Aorta (tissue), 5 donors: ENCODE measurements at regions of chr12 and their contacts with region 1.

Region 1: DNA sequence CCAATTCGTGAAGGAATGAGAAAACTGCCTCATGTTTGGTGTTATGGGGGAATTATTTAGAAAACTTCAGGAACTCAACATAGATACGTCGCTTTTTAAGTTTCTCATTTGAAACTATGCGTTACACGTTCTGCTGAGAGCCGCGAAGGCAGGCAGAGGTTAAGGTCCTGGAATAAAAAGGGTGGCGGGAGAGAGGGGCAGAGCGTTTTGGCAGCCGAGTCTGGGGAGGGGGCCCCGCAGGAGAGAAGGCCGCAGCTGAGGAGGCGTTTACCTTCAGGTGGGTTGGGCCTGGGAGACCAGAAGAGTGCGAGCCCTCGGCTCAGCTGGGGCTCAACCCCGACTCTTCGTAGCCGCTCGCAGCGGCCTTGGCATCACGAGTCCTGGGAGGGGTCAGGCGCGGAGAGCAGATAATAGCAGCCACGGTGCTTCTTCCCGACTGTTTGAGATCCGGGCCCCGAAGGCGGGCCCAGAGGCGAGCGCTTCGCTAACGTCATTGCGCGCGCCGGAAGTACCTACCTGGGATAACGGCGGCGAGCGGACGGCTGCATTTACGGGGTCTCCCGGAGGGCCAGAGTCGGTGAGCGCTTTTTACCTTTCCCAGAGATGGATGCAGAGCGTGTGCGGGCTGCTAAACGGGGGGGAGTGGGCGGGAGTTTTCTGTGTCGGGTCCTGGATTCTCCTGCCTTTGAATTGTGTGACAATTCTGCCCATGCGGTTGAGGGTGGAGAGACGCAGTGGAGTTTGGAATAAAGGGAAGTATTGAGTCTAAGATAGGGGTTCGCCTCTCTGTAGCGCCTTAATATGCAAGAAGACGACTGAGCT is at the starts of genes PPHLN1 and ZCRB1:
- DNase-seq: peak; percentile 88 to 94
- ATAC-seq: peak; percentile 95
- H3K4me3 ChIP-seq: peak within 1 kb of the TSS; percentile 82 to 97
- H3K27ac ChIP-seq: peak within 1 kb of the TSS; percentile 44 to 88
- H3K4me1 ChIP-seq: peaks cover 6 to 7% of the 10 kb centered on the region in 2 donors
- H3K27me3 ChIP-seq: no peaks in the 10 kb centered on the region
- total RNA-seq, gene PPHLN1: 50.0 to 52.8 TPM
- total RNA-seq, gene ZCRB1: 36.2 to 44.4 TPM

Region 2: DNA sequence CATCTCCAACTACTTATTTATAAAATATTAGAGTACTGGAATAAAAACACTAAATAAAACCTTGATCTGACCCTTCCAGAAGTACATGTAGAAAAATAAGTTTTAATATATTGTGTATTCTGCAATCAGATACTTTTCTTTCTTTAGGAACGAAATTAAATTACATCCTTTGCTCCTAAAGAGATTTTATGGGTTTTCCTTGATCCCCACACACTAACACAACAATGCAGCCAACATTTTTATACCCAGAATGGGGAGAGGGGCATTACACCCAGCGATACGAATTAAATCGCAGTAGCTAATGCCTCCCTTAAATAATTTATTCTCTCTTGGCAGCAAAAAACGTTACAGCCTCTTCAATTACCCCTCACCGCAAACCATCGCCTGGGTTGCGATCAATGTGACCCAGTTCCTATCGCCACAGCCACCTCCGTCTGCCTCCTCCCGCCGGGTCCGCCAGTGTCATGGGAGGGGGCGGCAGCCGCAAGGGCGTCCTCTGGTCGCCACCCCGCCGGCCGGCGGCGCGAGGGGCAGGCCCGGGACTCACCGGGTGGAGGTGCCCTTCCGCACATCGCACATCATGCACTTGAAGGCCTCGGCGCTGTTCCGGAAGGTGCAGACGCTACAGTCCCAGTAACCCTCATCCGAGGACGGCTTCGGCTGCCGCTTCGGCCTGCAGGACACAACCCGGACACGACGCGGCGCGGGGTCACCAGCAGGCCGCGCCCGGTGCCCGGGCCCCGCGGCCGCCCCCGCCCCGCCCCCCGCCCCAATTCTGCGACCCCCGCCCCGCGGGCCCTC is 88.6 kb before region 1 on chr12:
- intact Hi-C with region 1: loop called (anchors 5 kb)
- DNase-seq: peak; percentile 86 to 90
- ATAC-seq: peak; percentile 73
- H3K4me3 ChIP-seq: peak overlapping the region; percentile 99 to 100
- H3K27ac ChIP-seq: peak overlapping the region; percentile 9 to 99
- H3K4me1 ChIP-seq: peaks cover 0 to 5% of the 10 kb centered on the region in 2 donors
- H3K27me3 ChIP-seq: no peaks in the 10 kb centered on the region